Activated T-helper 1 cell treated with anti-CD3 and anti-CD28 coated beads, Interleukin-12 subunit alpha, Interleukin-12 subunit beta, Interleukin-2, Interleukin-4 antibody, amounts not matched to agents 30 ng/mL and 10 ng/mL and 1 ng/mL, durations not matched to agents 14 hours and 24 hours and 36 hours (primary cell): ENCODE measurements at regions of chr2 and their contacts with region 1.

Region 1: GRCh38 chr2:7725171-7725849 is 808.1 kb downstream of the RNF144A start:
- DNase-seq: peak; percentile 64
- H3K4me3 Mint-ChIP-seq: peak overlapping the region; percentile 87
- H3K27ac Mint-ChIP-seq: peak overlapping the region; percentile 95
- H3K4me1 Mint-ChIP-seq: peaks cover 73% of the 10 kb centered on the region
- H3K27me3 Mint-ChIP-seq: no peaks in the 10 kb centered on the region

Region 2: DNA sequence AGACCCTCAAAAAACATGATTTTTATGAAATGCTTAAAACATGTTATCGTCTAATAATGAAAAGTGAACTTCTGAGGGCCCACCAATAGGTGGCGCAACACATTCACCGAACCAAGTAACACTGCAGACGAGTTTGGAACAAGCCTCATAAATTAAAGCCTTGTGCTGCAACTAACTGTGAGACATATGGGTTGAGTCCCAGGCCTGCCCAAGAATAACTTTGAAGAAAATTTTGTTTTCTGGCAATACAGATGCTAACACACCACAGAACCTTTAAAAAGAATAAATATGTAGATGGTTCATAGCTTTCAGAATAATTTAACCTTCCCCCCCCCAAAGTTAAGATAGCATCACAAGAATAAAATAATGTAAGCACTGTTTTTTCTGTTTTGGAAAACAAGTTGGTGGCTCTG is 522.2 kb before region 1 on chr2:
- intact Hi-C with region 1: loop called (anchors 5 kb)
- DNase-seq: peak; percentile 27
- H3K4me3 Mint-ChIP-seq: no peak overlapping the region
- H3K27ac Mint-ChIP-seq: no peak overlapping the region
- H3K4me1 Mint-ChIP-seq: peaks cover 4% of the 10 kb centered on the region
- H3K27me3 Mint-ChIP-seq: peaks cover 4% of the 10 kb centered on the region

Region 3: DNA sequence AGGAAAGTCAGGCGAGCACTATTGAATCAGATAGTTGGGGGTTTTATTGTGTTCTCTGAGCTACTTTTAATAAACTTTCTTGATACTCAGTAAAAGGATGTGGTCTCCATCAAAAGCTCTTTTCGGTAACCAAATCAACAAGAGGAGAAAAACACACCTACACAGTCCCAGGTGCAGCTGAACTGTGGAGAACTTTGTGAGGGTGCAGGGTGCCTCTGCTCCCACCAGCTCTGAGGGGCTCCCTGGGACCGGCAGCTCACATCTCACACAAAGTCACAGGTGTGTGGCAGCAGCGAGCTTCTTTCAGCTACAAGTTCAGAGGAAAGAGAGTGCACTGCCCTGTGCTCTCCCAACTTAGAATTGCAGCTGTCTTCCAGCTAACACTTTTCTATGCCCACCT is 157.7 kb before region 1 on chr2:
- intact Hi-C with region 1: loop called (anchors 5 kb)
- DNase-seq: peak; percentile 47
- H3K4me3 Mint-ChIP-seq: peak overlapping the region; percentile 25
- H3K27ac Mint-ChIP-seq: peak overlapping the region; percentile 90
- H3K4me1 Mint-ChIP-seq: peaks cover 59% of the 10 kb centered on the region
- H3K27me3 Mint-ChIP-seq: no peaks in the 10 kb centered on the region

Region 4: GRCh38 chr2:7692657-7693161 is 32.6 kb before region 1 on chr2:
- intact Hi-C with region 1: loop called (anchors 1 kb)
- DNase-seq: no peak
- H3K4me3 Mint-ChIP-seq: peak overlapping the region; percentile 48
- H3K27ac Mint-ChIP-seq: peak overlapping the region; percentile 94
- H3K4me1 Mint-ChIP-seq: peaks cover 51% of the 10 kb centered on the region
- H3K27me3 Mint-ChIP-seq: no peaks in the 10 kb centered on the region

Region 5: DNA sequence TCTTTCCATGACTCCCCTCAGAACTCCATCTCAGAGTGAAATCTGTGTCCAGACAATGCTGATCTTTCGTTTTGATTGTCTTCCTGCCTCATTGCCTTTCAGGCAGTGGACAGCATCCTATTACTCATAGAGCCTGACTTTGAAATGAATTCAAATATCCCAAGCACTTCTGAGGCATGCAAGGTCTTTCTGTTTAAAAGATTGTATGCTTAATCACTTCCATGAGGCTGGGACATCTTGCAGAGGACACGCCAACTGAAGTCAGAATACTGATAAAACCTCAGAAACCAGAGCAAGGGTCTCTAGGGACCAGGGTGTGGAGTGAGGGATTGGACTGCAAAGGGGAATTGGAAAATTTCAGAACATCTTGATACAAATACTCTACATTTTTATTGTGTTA is 120.0 kb after region 1 on chr2:
- intact Hi-C with region 1: loop called (anchors 1 kb)
- DNase-seq: no peak
- H3K4me3 Mint-ChIP-seq: no peak overlapping the region
- H3K27ac Mint-ChIP-seq: no peak overlapping the region
- H3K4me1 Mint-ChIP-seq: peaks cover 57% of the 10 kb centered on the region
- H3K27me3 Mint-ChIP-seq: no peaks in the 10 kb centered on the region